ENCODE measurements at regions of chr5 and their contacts with region 1.

Region 1: DNA sequence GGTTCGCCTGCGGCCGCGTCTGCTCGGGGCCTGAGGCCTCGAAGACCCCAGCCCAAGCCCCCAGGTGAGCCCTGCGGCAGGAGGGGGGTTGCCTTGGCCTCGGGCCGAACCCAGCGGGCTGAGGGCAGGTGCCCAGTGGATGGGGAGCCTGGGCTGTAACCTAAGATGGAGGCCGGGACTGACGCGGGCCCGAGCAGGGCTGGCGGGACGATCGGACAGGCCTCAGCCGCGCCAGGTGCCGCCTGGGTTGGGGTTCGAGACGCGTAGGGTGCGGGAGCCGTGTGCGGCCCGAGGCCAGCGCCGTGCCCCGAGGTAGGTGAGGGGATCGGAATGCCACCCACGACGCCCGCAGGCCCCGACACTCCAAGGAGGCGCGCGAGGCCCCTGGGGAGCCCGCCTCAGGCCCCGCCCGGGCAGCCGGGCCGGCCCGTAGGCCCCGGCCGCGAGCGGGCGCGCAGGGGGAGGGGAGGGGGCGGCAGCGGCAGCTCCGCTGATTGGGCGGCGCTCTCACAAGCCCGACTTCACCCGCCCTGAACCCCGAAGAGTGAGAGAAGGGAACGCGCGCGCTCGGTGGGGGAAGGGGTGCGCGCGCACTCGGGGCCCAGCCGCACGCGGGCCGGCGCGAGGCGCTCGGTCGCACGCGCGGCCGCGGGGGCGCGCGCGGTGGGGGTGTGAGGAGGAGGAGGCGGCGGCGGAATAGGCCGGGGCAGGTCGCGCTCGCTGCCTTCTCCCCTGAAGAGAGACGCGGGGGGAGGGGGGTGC is at the start of gene NSD1:
- DNase-seq: peak; percentile 92 to 96 (median 94)
- H3K4me3 ChIP-seq: peak within 1 kb of the TSS; percentile 78
- H3K27ac ChIP-seq: peak within 1 kb of the TSS; percentile 99
- H3K4me1 ChIP-seq: peaks cover 15% of the 10 kb centered on the region
- H3K27me3 ChIP-seq: no peaks in the 10 kb centered on the region
- CTCF ChIP-seq: no peak
- EP300 ChIP-seq: no peak
- POLR2A ChIP-seq: peak; percentile 88
- total RNA-seq, gene NSD1: 25.6 to 110 (median 83.2) TPM

Region 2: DNA sequence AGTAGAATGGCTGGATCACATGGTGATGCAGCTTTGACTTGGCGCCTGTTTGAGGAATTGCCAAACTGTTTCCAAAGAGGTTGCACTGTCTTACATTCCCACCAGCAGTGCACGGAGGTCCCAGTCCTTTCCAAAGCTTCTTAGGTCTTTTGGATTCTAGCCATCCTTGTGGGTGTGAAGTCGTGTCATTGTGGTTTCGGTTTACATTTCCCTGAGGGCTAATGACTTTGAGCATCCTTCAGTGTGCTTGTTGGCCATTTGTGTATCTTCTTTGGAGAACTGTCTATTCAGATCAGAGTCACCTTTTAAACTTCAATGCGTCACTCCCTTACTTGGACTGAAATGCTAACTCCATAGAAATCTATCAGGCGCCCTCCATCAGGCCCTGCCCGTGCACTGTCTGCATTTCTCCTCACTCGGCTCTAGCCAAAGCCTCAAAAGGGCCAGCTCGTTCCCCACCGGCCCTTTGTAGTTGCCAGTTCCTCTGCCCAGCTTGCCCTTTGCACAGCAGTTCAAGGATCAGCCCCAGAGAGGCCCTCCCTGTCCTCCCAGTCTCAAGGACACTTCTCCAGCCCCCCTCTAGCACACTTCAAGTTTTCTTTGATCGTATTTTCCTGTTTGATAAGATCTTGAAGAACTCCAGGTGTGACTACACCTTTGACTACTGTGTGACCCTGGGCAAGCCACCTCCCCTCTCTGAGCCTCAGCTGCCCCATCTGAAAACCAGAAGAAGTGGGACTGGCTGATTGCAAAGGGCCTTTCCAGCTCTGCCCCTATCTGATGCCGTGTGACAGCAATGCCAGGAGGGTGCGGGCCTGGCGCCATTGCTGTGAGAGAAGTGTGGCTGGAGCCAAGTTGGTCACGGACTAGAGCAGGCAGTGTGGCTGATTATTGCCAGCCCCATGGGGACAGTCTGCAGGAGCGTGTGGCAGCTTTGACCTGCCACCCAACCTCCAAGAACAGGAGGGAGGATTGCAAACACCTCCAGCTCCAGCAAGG is 1469.8 kb before region 1 on chr5:
- intact Hi-C with region 1: loop called in 1 of 4 experiments (anchors 5 kb)
- DNase-seq: no peak
- H3K4me3 ChIP-seq: no peak overlapping the region
- H3K27ac ChIP-seq: no peak overlapping the region
- H3K4me1 ChIP-seq: no peaks in the 10 kb centered on the region
- H3K27me3 ChIP-seq: no peaks in the 10 kb centered on the region
- CTCF ChIP-seq: no peak
- EP300 ChIP-seq: no peak
- POLR2A ChIP-seq: no peak